ENCODE measurements at regions of chr10 and their contacts with region 1.

Region 1: GRCh38 chr10:125707541-125708468 is 11.7 kb upstream of the EDRF1 start:
- DNase-seq: no peak
- H3K4me3 ChIP-seq: no peak overlapping the region
- H3K27ac ChIP-seq: no peak overlapping the region
- H3K4me1 ChIP-seq: peaks cover 15% of the 10 kb centered on the region
- H3K27me3 ChIP-seq: no peaks in the 10 kb centered on the region
- CTCF ChIP-seq: no peak
- POLR2A ChIP-seq: no peak

Region 2: GRCh38 chr10:125494651-125495239 is 213.1 kb before region 1 on chr10:
- intact Hi-C with region 1: no loop called
- DNase-seq: no peak
- H3K4me3 ChIP-seq: no peak overlapping the region
- H3K27ac ChIP-seq: no peak overlapping the region
- H3K4me1 ChIP-seq: no peaks in the 10 kb centered on the region
- H3K27me3 ChIP-seq: no peaks in the 10 kb centered on the region
- CTCF ChIP-seq: no peak
- POLR2A ChIP-seq: no peak

Region 3: GRCh38 chr10:126001576-126001975 is 293.8 kb after region 1 on chr10:
- intact Hi-C with region 1: no loop called
- DNase-seq: no peak
- H3K4me3 ChIP-seq: no peak overlapping the region
- H3K27ac ChIP-seq: no peak overlapping the region
- H3K4me1 ChIP-seq: no peaks in the 10 kb centered on the region
- H3K27me3 ChIP-seq: no peaks in the 10 kb centered on the region
- CTCF ChIP-seq: no peak
- POLR2A ChIP-seq: no peak

Region 4: GRCh38 chr10:127415901-127416581 is 1708.2 kb after region 1 on chr10:
- intact Hi-C with region 1: loop called (anchors 10 kb)
- DNase-seq: no peak
- H3K4me3 ChIP-seq: no peak overlapping the region
- H3K27ac ChIP-seq: no peak overlapping the region
- H3K4me1 ChIP-seq: no peaks in the 10 kb centered on the region
- H3K27me3 ChIP-seq: no peaks in the 10 kb centered on the region
- CTCF ChIP-seq: no peak
- POLR2A ChIP-seq: no peak

Measured in vagina (tissue), 2 donors.